ENCODE measurements at regions of chr9 and their contacts with region 1.

Region 1: GRCh38 chr9:122445155-122445749 is 32.5 kb downstream of the OR1J1 start:
- DNase-seq: no peak

Region 2: GRCh38 chr9:122389799-122390481 is 55.3 kb before region 1 on chr9:
- intact Hi-C with region 1: loop called (anchors 10 kb)
- DNase-seq: no peak

Region 3: DNA sequence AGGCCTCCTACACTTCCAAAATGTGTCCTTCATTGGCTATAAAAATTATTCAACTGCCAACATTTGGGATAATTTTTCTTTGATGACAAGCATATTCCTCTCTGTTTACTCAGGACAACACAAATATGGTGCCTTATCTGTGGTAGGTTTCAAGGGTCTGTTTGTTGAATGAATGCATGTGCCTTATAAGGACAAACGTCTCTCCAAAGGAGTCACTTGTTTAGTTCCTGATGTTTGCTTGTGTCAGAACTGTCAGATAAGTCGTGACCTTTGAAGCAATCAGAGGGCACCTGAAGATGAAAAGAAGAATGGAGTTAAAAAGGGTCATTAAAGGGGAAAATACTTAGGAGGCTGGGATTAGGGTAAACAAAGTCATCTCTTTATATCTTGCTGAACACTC is 61.7 kb after region 1 on chr9:
- intact Hi-C with region 1: no loop called
- DNase-seq: no peak

Measured in cardiac septum (tissue), 1 donor.